ENCODE measurements at regions of chr10 and their contacts with region 1.

Region 1: GRCh38 chr10:73810735-73811465 is 498 bp downstream of the NDST2 start:
- DNase-seq: peak in 1 of 2 experiments; percentile 75
- H3K4me3 ChIP-seq: peak overlapping the region; percentile 69 to 91 (median 78)
- H3K27ac ChIP-seq: no peak overlapping the region
- H3K4me1 ChIP-seq: peaks cover 0 to 4% (median 2%) of the 10 kb centered on the region in 4 experiments; a peak in 4 of 7 replicates
- H3K27me3 ChIP-seq: no peaks in the 10 kb centered on the region
- CTCF ChIP-seq: no peak
- EP300 ChIP-seq: no peak
- POLR2A ChIP-seq: no peak
- RAD21 ChIP-seq: no peak

Region 2: DNA sequence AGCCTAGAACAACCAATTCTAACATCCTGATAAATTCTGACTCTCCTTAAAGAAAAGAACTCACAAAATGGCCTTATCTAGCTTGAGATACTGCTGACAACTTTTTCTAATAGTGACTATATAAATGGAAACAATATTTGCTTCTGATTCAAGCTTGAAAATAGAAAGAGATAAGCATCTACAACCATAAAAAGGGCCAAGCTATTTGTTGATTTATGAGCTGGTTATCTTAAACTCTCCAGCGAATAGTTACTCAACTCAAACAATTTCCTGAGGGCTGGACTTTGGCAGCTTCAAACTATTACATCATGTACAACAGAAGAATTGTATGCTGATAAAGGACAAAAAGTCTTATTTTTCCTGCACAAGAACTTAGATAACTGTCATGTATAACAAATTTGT is 224.3 kb before region 1 on chr10:
- CTCF ChIA-PET with region 1: no interaction called
- POLR2A ChIA-PET with region 1: no interaction called
- DNase-seq: no peak
- H3K4me3 ChIP-seq: no peak overlapping the region
- H3K27ac ChIP-seq: no peak overlapping the region
- H3K4me1 ChIP-seq: peaks cover 2 to 9% (median 5%) of the 10 kb centered on the region in 4 experiments; a peak in 4 of 7 replicates
- H3K27me3 ChIP-seq: no peaks in the 10 kb centered on the region
- CTCF ChIP-seq: no peak
- EP300 ChIP-seq: no peak
- POLR2A ChIP-seq: no peak
- RAD21 ChIP-seq: no peak

Region 3: DNA sequence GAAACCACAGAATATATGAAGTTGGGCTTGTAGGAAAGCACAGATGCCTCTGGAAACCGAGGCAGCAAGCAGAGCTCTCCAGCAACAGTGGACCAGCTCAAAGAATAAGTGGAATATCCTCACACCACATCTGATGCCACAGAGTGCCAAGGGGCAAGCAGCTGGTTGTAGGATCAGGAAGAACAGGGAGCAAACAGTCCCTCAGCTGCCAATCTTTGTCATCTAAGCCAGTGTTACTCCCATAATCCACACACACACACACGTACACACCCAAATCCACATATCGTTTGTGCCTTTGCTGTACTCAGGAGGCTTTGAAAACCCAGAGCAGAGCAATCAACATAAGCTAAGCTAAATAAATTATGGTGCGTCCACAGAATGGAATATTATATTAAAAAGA is 87.4 kb before region 1 on chr10:
- CTCF ChIA-PET with region 1: no interaction called
- POLR2A ChIA-PET with region 1: no interaction called
- DNase-seq: no peak
- H3K4me3 ChIP-seq: no peak overlapping the region
- H3K27ac ChIP-seq: no peak overlapping the region
- H3K4me1 ChIP-seq: no peaks in the 10 kb centered on the region
- H3K27me3 ChIP-seq: no peaks in the 10 kb centered on the region
- CTCF ChIP-seq: no peak
- EP300 ChIP-seq: no peak
- POLR2A ChIP-seq: no peak
- RAD21 ChIP-seq: no peak

Region 4: GRCh38 chr10:73785221-73785720 is 25.6 kb before region 1 on chr10 and contains the start of gene ZSWIM8:
- CTCF ChIA-PET with region 1: interaction called, 13 read pairs
- POLR2A ChIA-PET with region 1: interaction called, 8 read pairs
- DNase-seq: peak; percentile 51 to 82
- H3K4me3 ChIP-seq: peak within 1 kb of the TSS; percentile 71 to 96 (median 90)
- H3K27ac ChIP-seq: no peak within 1 kb of the TSS
- H3K4me1 ChIP-seq: peaks cover 2 to 4% (median 3%) of the 10 kb centered on the region in 4 experiments; a peak in 5 of 7 replicates
- H3K27me3 ChIP-seq: no peaks in the 10 kb centered on the region
- CTCF ChIP-seq: peak in 1 of 3 experiments; percentile 2; a peak in 1 of 4 replicates
- EP300 ChIP-seq: no peak
- POLR2A ChIP-seq: no peak
- RAD21 ChIP-seq: no peak
- total RNA-seq, gene ZSWIM8: 44.7 and 49.8 TPM in 2 replicates

Region 5: GRCh38 chr10:73798927-73799563 is 11.9 kb before region 1 on chr10:
- CTCF ChIA-PET with region 1: interaction called, 6 read pairs
- POLR2A ChIA-PET with region 1: interaction called, 137 read pairs
- DNase-seq: no peak
- H3K4me3 ChIP-seq: no peak overlapping the region
- H3K27ac ChIP-seq: no peak overlapping the region
- H3K4me1 ChIP-seq: no peaks in the 10 kb centered on the region
- H3K27me3 ChIP-seq: no peaks in the 10 kb centered on the region
- CTCF ChIP-seq: no peak
- EP300 ChIP-seq: no peak
- POLR2A ChIP-seq: 0 out of 3 replicates have a peak, but pooled peaks of 1 of the 2 experiments have one; percentile 13
- RAD21 ChIP-seq: no peak

Region 6: GRCh38 chr10:73827346-73828089 is 16.6 kb after region 1 on chr10:
- CTCF ChIA-PET with region 1: interaction called, 209 read pairs
- POLR2A ChIA-PET with region 1: interaction called, 6 read pairs
- DNase-seq: no peak
- H3K4me3 ChIP-seq: no peak overlapping the region
- H3K27ac ChIP-seq: no peak overlapping the region
- H3K4me1 ChIP-seq: no peaks in the 10 kb centered on the region
- H3K27me3 ChIP-seq: no peaks in the 10 kb centered on the region
- CTCF ChIP-seq: no peak
- EP300 ChIP-seq: no peak
- POLR2A ChIP-seq: no peak
- RAD21 ChIP-seq: no peak